ENCODE measurements at regions of chr6 and their contacts with region 1.

Region 1: DNA sequence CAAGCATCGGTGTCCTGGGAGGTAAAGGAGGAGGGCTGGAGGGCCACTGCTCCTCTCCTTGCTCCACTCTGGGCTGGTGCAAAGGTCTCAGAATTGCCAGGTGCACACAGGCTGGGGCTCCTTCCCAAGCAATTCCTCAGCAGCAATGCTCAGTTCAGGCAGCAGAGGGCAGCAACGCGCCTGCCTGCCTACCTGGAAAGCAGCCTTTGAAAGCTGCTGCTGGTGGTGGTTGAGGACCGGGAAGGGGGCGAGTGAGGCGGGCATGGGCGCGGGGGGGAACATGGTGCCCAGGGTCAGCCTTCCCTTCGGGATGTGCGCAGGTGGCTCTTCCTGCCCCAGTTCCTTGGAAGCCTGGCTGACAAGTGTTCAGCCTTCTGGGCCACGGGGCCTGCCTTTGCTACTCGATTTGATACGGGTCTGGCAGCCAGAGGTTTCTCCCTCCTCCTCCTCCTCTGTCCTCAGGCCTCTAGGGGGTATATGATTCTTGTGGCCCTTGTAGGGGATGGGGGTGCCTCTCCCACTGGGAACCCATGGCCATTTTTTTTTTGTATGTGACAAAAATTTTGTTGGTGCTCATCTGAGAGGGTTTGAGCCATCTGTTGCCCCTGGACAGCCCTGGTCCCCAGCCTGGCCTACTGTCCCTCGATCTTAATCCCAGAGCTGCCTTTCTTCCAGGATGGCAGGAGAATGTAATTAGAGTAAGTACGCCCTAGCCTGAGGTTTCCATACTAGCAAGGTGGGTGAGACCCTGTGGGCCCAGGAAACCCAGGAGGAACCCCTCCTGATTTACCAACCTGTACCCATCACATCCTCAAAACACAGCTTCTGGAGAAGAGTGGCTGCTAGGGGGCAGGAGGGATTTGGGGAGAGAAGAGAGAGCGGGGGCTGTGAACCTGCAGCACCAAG is 20.1 kb downstream of the MRPS18A start:
- DNase-seq: peak; percentile 61 to 86
- H3K4me3 ChIP-seq: peak overlapping the region; percentile 25; the same call in 1 of the 2 replicates
- H3K27ac ChIP-seq: peak overlapping the region; percentile 43
- H3K4me1 ChIP-seq: peaks cover 62% of the 10 kb centered on the region
- H3K27me3 ChIP-seq: no peaks in the 10 kb centered on the region
- CTCF ChIP-seq: peak; percentile 94

Region 2: GRCh38 chr6:43629505-43630300 is 37.8 kb before region 1 on chr6:
- CTCF ChIA-PET with region 1: no interaction called
- POLR2A ChIA-PET with region 1: interaction called, 5 read pairs
- intact Hi-C with region 1: loop called (anchors 5 kb)
- DNase-seq: peak; percentile 96 to 97
- H3K4me3 ChIP-seq: peak overlapping the region; percentile 93
- H3K27ac ChIP-seq: peak overlapping the region; percentile 97
- H3K4me1 ChIP-seq: peaks cover 34% of the 10 kb centered on the region
- H3K27me3 ChIP-seq: no peaks in the 10 kb centered on the region
- CTCF ChIP-seq: no peak

Region 3: GRCh38 chr6:43698584-43699349 is 31.3 kb after region 1 on chr6:
- CTCF ChIA-PET with region 1: interaction called, 4 read pairs
- POLR2A ChIA-PET with region 1: no interaction called
- intact Hi-C with region 1: loop called (anchors 2 kb)
- DNase-seq: peak; percentile 51 to 53
- H3K4me3 ChIP-seq: no peak overlapping the region; the same call in 1 of the 2 replicates
- H3K27ac ChIP-seq: peak overlapping the region; percentile 78
- H3K4me1 ChIP-seq: peaks cover 77% of the 10 kb centered on the region
- H3K27me3 ChIP-seq: no peaks in the 10 kb centered on the region
- CTCF ChIP-seq: no peak

Region 4: DNA sequence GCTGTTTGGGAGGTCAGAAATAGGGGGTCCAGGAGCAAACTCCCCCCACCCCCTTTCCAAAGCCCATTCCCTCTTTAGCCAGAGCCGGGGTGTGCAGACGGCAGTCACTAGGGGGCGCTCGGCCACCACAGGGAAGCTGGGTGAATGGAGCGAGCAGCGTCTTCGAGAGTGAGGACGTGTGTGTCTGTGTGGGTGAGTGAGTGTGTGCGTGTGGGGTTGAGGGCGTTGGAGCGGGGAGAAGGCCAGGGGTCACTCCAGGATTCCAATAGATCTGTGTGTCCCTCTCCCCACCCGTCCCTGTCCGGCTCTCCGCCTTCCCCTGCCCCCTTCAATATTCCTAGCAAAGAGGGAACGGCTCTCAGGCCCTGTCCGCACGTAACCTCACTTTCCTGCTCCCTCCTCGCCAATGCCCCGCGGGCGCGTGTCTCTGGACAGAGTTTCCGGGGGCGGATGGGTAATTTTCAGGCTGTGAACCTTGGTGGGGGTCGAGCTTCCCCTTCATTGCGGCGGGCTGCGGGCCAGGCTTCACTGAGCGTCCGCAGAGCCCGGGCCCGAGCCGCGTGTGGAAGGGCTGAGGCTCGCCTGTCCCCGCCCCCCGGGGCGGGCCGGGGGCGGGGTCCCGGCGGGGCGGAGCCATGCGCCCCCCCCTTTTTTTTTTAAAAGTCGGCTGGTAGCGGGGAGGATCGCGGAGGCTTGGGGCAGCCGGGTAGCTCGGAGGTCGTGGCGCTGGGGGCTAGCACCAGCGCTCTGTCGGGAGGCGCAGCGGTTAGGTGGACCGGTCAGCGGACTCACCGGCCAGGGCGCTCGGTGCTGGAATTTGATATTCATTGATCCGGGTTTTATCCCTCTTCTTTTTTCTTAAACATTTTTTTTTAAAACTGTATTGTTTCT is 102.3 kb after region 1 on chr6 and contains the start of gene VEGFA:
- CTCF ChIA-PET with region 1: interaction called, 11 read pairs
- POLR2A ChIA-PET with region 1: interaction called, 5 read pairs
- intact Hi-C with region 1: loop called (anchors 1 kb)
- DNase-seq: peak; percentile 76 to 85
- H3K4me3 ChIP-seq: peak within 1 kb of the TSS; percentile 90
- H3K27ac ChIP-seq: peak within 1 kb of the TSS; percentile 94
- H3K4me1 ChIP-seq: peaks cover 12% of the 10 kb centered on the region
- H3K27me3 ChIP-seq: no peaks in the 10 kb centered on the region
- CTCF ChIP-seq: peak; percentile 99
- total RNA-seq, gene VEGFA: 112 and 117 TPM in 2 replicates

Region 5: GRCh38 chr6:43838276-43839036 is 171.0 kb after region 1 on chr6:
- CTCF ChIA-PET with region 1: no interaction called
- POLR2A ChIA-PET with region 1: no interaction called
- intact Hi-C with region 1: loop called (anchors 5 kb)
- DNase-seq: peak; percentile 39 to 57
- H3K4me3 ChIP-seq: no peak overlapping the region; the same call in 1 of the 2 replicates
- H3K27ac ChIP-seq: peak overlapping the region; percentile 73
- H3K4me1 ChIP-seq: peaks cover 36% of the 10 kb centered on the region
- H3K27me3 ChIP-seq: no peaks in the 10 kb centered on the region
- CTCF ChIP-seq: peak; percentile 85

Region 6: GRCh38 chr6:44338228-44339122 is 671.0 kb after region 1 on chr6:
- CTCF ChIA-PET with region 1: no interaction called
- POLR2A ChIA-PET with region 1: no interaction called
- intact Hi-C with region 1: loop called (anchors 5 kb)
- DNase-seq: peak in 1 of 2 experiments; percentile 56
- H3K4me3 ChIP-seq: no peak overlapping the region
- H3K27ac ChIP-seq: no peak overlapping the region
- H3K4me1 ChIP-seq: peaks cover 7% of the 10 kb centered on the region; the same call in 1 of the 2 replicates
- H3K27me3 ChIP-seq: peaks cover 15% of the 10 kb centered on the region; the same call in 1 of the 2 replicates
- CTCF ChIP-seq: peak; percentile 84